Activated naive CD4-positive, alpha-beta T cell treated with anti-CD3 and anti-CD28 coated beads for 36 hours (primary cell): ENCODE measurements at regions of chr12 and their contacts with region 1.

Region 1: GRCh38 chr12:103924761-103925641 is 5.2 kb upstream of the HSP90B1 start:
- DNase-seq: peak; percentile 86
- H3K4me3 Mint-ChIP-seq: peak overlapping the region; percentile 69
- H3K27ac Mint-ChIP-seq: peak overlapping the region; percentile 90
- H3K4me1 Mint-ChIP-seq: peaks cover 39% of the 10 kb centered on the region
- H3K27me3 Mint-ChIP-seq: no peaks in the 10 kb centered on the region

Region 2: DNA sequence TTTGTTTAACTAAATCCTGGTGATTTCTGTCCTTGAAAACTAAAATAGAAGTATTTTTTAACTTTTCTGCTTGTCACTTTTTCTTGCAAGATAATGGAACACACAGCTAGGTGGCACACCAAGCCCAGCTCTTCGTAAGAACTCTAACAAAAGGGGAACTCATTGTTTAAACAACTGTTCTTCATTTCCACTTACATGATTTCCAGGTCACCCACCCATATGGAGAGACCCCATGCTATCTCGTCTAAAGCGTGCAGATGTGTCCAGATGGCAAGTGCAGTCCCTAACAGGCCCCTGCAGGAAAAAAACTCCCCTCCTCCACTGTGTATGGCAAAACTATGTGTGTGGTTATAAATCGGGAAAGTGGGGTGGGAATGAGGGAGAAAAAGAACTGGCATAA is 40.7 kb before region 1 on chr12:
- CTCF ChIA-PET with region 1: interaction called, 10 read pairs
- intact Hi-C with region 1: loop called (anchors 1 kb)
- DNase-seq: peak; percentile 75
- H3K4me3 Mint-ChIP-seq: no peak overlapping the region
- H3K27ac Mint-ChIP-seq: no peak overlapping the region
- H3K4me1 Mint-ChIP-seq: peaks cover 22% of the 10 kb centered on the region
- H3K27me3 Mint-ChIP-seq: no peaks in the 10 kb centered on the region

Region 3: DNA sequence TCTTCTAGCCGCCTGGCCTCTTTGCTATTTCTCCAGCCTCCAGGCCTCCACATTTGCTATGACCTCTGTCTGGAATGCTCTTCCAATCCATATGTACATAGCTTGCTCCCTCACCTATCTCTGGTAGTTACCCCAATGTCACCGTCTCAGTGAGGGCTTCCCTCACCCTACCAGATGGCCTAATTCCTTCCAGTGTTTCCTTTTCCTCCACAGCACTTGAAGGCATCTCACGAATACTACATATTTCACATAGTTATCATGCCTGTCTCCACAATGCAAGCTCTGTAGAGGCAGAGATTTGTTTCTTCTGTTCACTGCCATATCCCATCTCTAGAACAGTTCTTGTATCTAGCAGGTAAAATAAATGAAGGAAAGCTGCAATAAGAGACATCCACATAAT is 16.1 kb before region 1 on chr12:
- CTCF ChIA-PET with region 1: interaction called, 5 read pairs
- intact Hi-C with region 1: loop called (anchors 1 kb)
- DNase-seq: no peak
- H3K4me3 Mint-ChIP-seq: no peak overlapping the region
- H3K27ac Mint-ChIP-seq: peak overlapping the region; percentile 28
- H3K4me1 Mint-ChIP-seq: peaks cover 39% of the 10 kb centered on the region
- H3K27me3 Mint-ChIP-seq: no peaks in the 10 kb centered on the region

Region 4: GRCh38 chr12:104083769-104084475 is 158.9 kb after region 1 on chr12:
- CTCF ChIA-PET with region 1: no interaction called
- intact Hi-C with region 1: loop called (anchors 1 kb)
- DNase-seq: peak; percentile 61
- H3K4me3 Mint-ChIP-seq: no peak overlapping the region
- H3K27ac Mint-ChIP-seq: no peak overlapping the region
- H3K4me1 Mint-ChIP-seq: peaks cover 15% of the 10 kb centered on the region
- H3K27me3 Mint-ChIP-seq: no peaks in the 10 kb centered on the region

Region 5: DNA sequence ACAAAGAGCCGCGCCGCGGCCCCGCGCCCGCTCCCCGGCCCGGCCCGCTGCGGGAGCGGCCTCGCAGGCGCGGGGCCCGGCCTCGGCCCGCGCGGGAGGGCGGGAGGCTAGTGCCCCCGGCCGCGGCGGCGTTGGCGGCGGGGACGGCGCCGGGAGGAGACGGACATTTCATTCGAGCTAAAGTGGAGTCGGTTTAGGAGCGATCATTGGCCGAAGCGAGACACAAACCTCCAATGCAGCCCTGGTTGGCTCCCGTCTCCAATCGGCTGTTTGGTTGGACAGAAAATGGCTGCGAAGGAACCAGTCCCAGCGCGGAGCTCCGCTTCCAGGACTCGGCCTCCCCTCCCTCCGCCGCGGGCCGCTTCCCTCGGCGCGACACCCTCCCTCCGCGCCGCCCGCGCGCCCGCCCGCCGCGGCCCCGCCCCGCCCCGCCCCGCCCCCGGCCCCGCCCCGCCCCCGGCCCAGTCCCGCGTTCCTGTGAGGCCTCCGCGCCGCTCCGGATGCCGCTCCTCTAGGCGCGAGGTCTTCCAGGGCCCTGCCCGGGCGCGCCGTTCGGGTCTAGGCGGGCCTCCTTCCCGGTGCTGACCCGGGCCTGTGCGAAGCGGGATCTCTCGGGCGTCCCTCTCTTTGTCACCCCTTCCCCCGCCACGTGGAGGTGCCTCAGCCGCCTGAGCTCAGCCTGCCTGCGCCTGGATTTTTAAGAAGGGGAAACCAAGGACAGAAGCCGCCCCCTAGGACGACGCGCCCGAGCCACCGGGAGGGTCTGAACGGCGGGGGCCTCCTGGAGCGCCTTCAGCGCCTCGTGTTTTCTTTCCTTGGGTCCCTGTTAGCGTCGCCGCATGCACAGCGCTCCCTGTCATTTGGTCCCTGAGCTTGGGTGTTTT is 213.2 kb after region 1 on chr12 and contains the start of gene NFYB:
- CTCF ChIA-PET with region 1: no interaction called
- intact Hi-C with region 1: loop called (anchors 1 kb)
- DNase-seq: peak; percentile 95
- H3K4me3 Mint-ChIP-seq: peak within 1 kb of the TSS; percentile 84
- H3K27ac Mint-ChIP-seq: peak within 1 kb of the TSS; percentile 84
- H3K4me1 Mint-ChIP-seq: peaks cover 14% of the 10 kb centered on the region
- H3K27me3 Mint-ChIP-seq: no peaks in the 10 kb centered on the region
- total RNA-seq, gene NFYB: 23.3 to 28.3 TPM